Left colon (tissue), 2 donors: ENCODE measurements at regions of chr21 and their contacts with region 1.

Region 1: GRCh38 chr21:34345091-34345871 is 18.5 kb upstream of the KCNE2 start:
- DNase-seq: no peak
- ATAC-seq: no peak

Region 2: GRCh38 chr21:33924079-33924765 is 421.1 kb before region 1 on chr21:
- intact Hi-C with region 1: loop called in 1 of 2 experiments (anchors 5 kb)
- DNase-seq: peak; percentile 75 to 96
- ATAC-seq: peak; percentile 97

Region 3: DNA sequence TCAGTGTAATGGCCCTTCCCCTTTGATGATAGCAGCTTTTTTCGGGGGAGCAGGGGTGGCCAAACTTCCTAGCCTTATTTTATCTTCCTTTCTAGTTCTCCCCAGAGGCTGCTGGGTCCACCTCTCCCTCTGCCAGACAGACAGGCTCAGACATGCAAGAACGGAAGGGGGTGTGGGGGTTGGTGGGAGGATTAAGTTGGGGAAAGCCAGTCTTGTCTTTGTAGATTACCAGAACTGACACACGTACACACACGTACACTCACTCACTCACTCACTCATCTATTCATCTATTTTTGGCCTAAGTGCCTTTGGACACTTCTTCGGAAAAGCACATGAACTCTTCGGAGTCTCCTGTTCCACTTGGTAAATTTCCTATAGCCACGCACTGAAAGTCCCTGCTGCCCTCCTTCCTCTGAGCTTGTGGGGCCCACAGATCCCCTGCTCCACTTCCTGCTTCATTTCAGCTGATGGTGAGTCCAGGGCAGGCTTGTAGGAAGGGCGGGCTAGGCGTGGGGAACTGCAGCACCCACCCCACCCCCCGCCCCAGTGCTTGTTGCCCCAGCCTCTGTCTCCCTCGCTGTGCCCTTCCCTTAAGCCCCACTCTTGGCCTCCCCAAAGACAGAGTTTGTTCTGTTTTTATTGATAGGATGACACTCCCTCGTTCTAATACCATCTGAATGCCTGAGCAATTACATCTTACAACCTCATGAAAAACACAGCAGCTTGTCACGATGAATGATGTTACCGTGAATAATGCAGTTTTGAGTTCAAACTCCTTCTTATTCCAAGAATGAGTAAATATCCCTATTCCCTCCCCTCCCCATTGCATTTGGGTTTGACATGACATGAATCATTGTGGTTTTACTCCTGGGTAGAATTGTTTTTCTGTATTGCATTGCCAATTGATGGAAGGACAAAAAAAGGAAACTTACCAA is 368.9 kb before region 1 on chr21:
- intact Hi-C with region 1: no loop called
- DNase-seq: no peak
- ATAC-seq: no peak